ENCODE measurements at regions of chr1 and their contacts with region 1.

Region 1: DNA sequence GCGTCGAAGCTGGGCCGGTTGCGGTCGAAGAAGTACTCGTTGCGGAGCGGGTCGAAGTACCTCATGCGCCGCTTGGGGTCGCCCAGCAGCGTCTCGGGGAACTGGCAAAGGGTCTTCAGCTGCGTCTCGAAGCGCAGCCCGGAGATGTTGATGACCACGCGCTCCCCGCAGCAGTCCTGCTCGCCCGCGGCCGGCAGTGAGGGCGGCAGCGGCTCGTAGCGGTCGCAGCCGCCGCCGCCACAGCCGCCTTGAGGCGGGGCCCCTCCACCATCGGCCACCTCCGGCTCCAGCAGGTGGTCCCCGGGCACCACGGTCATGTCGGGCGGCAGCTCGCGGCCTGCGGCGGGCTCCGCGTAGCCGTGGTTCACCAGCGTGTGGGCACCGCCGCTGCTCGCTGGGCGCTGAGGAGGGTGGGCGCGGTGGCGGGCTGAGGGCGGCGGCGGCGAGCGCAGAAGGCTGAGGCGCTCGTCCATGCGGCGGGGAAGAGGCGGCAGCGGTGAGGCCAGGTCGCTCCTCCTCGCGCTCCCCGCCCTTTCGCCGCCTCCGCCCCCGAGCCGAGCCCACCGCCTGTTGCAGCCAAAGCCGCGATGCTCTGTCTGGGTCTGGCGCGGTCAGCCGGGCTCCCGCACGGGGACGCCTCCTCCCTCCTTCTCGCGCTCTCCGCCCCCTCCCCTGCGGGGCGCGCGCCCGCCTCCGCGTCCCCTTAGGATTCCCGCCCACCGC is at the start of gene KCNA3:
- DNase-seq: peak; percentile 64
- H3K4me3 Mint-ChIP-seq: peak within 1 kb of the TSS; percentile 98
- H3K27ac Mint-ChIP-seq: peak within 1 kb of the TSS; percentile 90
- H3K4me1 Mint-ChIP-seq: peaks cover 43% of the 10 kb centered on the region
- H3K27me3 Mint-ChIP-seq: no peaks in the 10 kb centered on the region
- total RNA-seq, gene KCNA3: 24.0 and 24.4 TPM in 2 replicates

Region 2: GRCh38 chr1:110209715-110210603 is 464.5 kb before region 1 on chr1 and contains the start of gene KCNC4:
- intact Hi-C with region 1: loop called (anchors 2 kb)
- DNase-seq: peak; percentile 90
- H3K4me3 Mint-ChIP-seq: peak within 1 kb of the TSS; percentile 88
- H3K27ac Mint-ChIP-seq: peak within 1 kb of the TSS; percentile 94
- H3K4me1 Mint-ChIP-seq: peaks cover 45% of the 10 kb centered on the region
- H3K27me3 Mint-ChIP-seq: no peaks in the 10 kb centered on the region
- total RNA-seq, gene KCNC4: 30.6 and 31.1 TPM in 2 replicates

Region 3: DNA sequence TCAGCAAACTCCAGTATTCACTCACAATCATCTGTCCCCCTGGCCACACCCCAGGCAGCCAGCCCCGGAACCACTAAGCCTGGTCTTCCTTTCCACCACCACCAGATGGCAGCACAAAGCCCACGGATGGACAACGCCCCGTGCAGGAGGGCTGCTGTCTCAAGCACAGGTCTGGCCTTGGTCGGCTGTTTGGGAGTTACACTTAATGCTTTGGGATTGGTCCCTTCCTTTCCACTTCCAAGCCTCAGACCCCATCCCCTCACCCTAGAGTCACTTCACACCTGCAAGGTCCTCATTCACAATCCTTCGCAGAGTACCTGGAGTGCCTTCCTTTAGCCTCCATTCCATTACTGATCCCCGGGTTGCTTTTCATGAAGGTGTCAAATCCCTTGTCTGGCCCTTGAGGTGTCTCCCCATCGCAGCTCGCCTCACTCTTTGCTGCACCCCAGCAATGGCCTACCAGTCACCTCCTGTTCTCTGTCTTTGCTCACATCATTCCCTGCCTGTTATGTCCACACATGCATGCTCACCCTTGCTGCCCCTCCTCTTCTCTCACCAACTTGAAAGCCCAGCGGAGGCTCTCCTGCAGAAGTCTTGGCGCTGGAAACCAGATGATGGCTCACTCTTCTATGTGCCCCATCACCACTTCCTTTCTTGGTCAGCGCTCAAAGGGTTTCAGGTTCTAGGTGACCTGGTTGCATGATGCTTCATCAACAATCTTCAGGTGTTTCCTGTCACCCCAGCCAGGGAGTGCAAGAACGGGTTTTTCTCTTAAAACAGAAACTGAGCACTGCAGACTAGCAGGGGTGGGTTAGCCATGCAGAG is 43.4 kb before region 1 on chr1:
- intact Hi-C with region 1: loop called (anchors 1 kb)
- DNase-seq: peak; percentile 81
- H3K4me3 Mint-ChIP-seq: no peak overlapping the region
- H3K27ac Mint-ChIP-seq: no peak overlapping the region
- H3K4me1 Mint-ChIP-seq: peaks cover 58% of the 10 kb centered on the region
- H3K27me3 Mint-ChIP-seq: no peaks in the 10 kb centered on the region

Region 4: DNA sequence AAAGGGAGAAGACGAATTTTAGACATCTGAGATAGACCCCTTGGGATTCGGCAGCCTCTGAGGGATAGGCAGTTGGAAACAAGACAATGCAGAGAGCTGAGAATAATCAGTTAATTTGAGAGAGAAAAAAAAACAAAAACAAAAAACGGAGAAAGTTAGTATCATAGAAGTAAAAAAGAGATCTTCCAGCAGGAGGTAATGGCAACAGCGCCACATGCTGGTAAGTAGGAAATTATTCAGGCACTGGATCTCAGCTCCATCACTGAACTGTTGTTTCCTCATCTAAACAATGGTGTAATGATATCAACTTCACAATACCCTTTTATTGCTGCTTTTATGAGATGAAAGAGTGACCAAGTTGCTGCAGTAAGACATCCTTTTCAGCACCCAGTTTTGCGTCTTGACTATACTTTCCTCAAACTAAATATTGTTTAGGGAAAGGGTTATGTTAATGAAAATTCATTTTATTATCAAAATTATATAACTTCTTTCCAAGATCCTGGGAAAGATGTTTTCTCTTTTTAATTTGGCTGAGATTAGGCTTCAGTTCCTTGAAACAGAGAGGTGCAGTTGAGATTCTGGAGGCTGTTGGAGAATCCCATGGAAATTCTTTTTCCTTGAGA is 91.6 kb after region 1 on chr1:
- intact Hi-C with region 1: loop called (anchors 2 kb)
- DNase-seq: peak; percentile 31
- H3K4me3 Mint-ChIP-seq: no peak overlapping the region
- H3K27ac Mint-ChIP-seq: no peak overlapping the region
- H3K4me1 Mint-ChIP-seq: peaks cover 6% of the 10 kb centered on the region
- H3K27me3 Mint-ChIP-seq: peaks cover 57% of the 10 kb centered on the region

Region 5: GRCh38 chr1:110879758-110880606 is 205.5 kb after region 1 on chr1:
- intact Hi-C with region 1: loop called (anchors 1 kb)
- DNase-seq: peak; percentile 65
- H3K4me3 Mint-ChIP-seq: peak overlapping the region; percentile 84
- H3K27ac Mint-ChIP-seq: peak overlapping the region; percentile 100
- H3K4me1 Mint-ChIP-seq: peaks cover 75% of the 10 kb centered on the region
- H3K27me3 Mint-ChIP-seq: no peaks in the 10 kb centered on the region

Region 6: DNA sequence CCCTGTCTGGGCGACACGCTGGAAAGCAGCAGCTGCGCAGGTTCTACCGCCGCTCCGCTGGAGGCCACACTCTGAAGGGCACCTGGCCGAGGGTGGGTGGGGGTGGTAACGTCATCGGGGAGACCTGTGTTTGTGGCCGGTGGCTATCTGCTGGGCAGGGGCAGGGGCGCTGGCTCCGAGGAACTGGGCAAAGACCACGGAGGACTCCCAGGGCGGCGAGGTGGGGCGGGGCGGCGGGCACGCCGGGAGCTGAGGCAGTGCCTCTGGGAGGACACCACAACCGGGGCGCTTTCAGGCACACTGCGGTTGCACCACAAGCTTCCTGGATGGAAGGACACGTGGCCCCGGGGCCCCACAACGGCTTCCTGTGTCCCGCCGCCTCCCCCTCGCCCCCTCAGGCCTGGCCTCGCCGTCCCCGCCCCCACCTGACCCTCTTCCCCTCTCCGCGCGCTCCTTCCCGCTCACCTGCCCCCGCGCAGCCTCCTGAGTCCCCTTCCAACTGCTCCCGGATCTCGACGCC is 529.2 kb after region 1 on chr1:
- intact Hi-C with region 1: loop called (anchors 5 kb)
- DNase-seq: peak; percentile 83
- H3K4me3 Mint-ChIP-seq: peak overlapping the region; percentile 98
- H3K27ac Mint-ChIP-seq: peak overlapping the region; percentile 97
- H3K4me1 Mint-ChIP-seq: peaks cover 61% of the 10 kb centered on the region
- H3K27me3 Mint-ChIP-seq: no peaks in the 10 kb centered on the region

Region 7: GRCh38 chr1:111334169-111334568 is 659.7 kb after region 1 on chr1:
- intact Hi-C with region 1: no loop called
- DNase-seq: no peak
- H3K4me3 Mint-ChIP-seq: no peak overlapping the region
- H3K27ac Mint-ChIP-seq: no peak overlapping the region
- H3K4me1 Mint-ChIP-seq: no peaks in the 10 kb centered on the region
- H3K27me3 Mint-ChIP-seq: no peaks in the 10 kb centered on the region

Region 8: DNA sequence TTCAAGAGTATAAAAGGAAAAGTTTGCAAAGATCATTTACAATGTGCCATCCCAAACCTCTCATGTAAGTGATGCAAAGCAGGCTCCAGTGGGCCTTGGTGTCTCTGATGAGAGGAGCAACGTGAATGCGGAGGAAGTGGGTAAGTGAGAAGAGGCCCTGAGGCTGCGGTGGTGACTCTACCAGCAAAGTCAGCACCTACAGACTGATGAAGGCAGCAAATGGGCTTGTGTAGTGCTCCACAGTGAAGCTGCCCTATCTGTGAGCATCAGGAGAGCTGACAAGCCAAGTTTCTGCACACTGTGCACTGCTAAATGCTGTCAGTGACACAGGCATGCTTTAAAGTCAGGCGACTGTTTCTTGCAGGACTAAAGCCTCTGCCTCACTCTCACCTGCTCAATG is 929.5 kb after region 1 on chr1:
- intact Hi-C with region 1: loop called (anchors 2 kb)
- DNase-seq: peak; percentile 82
- H3K4me3 Mint-ChIP-seq: peak overlapping the region; percentile 66
- H3K27ac Mint-ChIP-seq: peak overlapping the region; percentile 97
- H3K4me1 Mint-ChIP-seq: peaks cover 70% of the 10 kb centered on the region
- H3K27me3 Mint-ChIP-seq: no peaks in the 10 kb centered on the region